Cardiac septum (tissue), 1 donor: ENCODE measurements at regions of chr13 and their contacts with region 1.

Region 1: DNA sequence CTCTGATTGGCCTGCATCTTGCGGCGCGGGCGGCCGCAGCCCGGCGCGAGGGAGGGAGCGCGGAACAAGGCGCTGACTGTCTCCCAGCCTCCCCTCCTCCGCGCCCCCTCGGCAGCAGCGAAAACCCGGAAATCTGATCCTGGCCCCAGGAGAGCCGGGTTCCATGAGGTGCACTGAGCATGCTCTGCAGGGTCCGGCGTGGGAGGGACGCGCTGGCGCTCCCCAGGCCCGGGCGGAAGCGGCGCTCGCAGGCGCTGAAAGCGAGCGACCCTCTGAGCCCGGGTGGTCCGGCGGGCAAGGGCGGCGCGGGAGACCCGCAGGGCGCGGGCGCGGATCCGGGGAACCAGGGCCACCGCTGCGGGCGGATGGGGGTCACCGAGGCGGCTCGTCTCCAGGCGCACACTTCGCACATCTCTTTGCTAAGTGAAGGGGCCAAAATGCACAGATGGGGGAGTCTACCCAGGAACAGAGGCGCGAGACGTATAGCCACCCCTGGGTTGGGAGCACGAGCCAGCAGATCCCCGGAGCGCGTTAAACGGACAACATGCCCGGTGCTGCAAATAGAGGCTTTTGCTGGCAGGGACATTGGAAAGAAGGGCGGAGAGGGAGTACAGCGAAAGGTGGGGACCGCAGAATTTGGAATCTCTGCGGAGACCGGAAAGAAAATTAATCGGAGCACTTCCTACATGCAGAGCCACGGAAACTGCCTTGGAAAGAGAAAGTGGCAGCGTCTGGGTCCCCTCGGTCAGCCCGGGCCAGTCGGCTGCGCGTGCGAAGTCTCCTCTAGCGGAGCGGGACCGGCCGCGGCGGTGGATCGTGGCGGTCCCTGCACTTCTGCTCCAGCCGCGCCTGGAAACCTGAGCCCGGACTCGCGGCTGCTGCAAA is 510 bp upstream of the PCDH9 start:
- DNase-seq: peak; percentile 97

Region 2: GRCh38 chr13:65656740-65657329 is 1573.8 kb before region 1 on chr13:
- intact Hi-C with region 1: loop called (anchors 10 kb)
- DNase-seq: no peak

Region 3: DNA sequence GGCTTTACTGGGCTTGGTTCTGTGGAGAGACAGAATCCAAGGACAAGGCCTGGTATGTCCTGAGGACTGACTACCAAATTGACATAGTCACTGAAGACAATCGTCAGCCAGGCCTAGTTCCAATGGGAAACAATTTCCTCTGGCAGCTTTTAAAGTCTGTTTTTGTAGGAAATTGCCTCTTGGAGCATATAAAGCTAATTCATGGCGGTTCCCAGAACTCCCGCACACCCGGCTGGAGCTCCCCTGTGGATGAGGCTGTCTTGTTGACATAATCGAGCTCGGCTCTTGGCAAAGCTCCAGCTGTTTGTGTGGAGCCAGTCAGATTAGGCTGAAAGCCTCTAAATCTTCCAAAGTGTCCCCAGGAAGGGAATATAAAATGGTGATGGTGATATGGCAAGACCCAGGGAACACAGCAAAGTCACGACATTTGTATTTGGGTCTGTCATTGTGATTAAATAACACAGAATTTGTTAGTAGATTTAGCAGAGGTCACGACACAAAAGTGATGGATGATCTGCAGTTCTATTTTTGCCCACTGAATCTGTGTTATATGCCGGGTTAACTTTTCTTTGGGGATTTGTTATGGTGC is 395.5 kb before region 1 on chr13:
- intact Hi-C with region 1: loop called (anchors 10 kb)
- DNase-seq: peak; percentile 81

Region 4: GRCh38 chr13:67283637-67284036 is 53.0 kb after region 1 on chr13:
- intact Hi-C with region 1: no loop called
- DNase-seq: no peak